Gastrocnemius medialis (tissue), 4 donors: ENCODE measurements at regions of chrX and their contacts with region 1.

Region 1: GRCh38 chrX:108537005-108537404 is 97.4 kb downstream of the COL4A5 start:
- DNase-seq: no peak
- ATAC-seq: peak in 1 of 2 donors; percentile 69
- H3K4me3 ChIP-seq: no peak overlapping the region
- H3K27ac ChIP-seq: no peak overlapping the region
- H3K4me1 ChIP-seq: no peaks in the 10 kb centered on the region
- H3K27me3 ChIP-seq: no peaks in the 10 kb centered on the region
- CTCF ChIP-seq: peak; percentile 57 to 71 (median 62)
- POLR2A ChIP-seq: no peak

Region 2: GRCh38 chrX:108224727-108225621 is 312.0 kb before region 1 on chrX:
- in situ Hi-C with region 1: loop called in 3 of 4 experiments (anchors 5 to 25 kb)
- intact Hi-C with region 1: loop called (anchors 2 kb)
- DNase-seq: no peak
- ATAC-seq: no peak
- H3K4me3 ChIP-seq: no peak overlapping the region
- H3K27ac ChIP-seq: no peak overlapping the region
- H3K4me1 ChIP-seq: no peaks in the 10 kb centered on the region
- H3K27me3 ChIP-seq: no peaks in the 10 kb centered on the region
- CTCF ChIP-seq: peak; percentile 19 to 61 (median 32)
- POLR2A ChIP-seq: no peak

Region 3: GRCh38 chrX:108297282-108297681 is 239.7 kb before region 1 on chrX:
- in situ Hi-C with region 1: no loop called
- intact Hi-C with region 1: loop called (anchors 2 kb)
- DNase-seq: no peak
- ATAC-seq: no peak
- H3K4me3 ChIP-seq: no peak overlapping the region
- H3K27ac ChIP-seq: no peak overlapping the region
- H3K4me1 ChIP-seq: no peaks in the 10 kb centered on the region
- H3K27me3 ChIP-seq: no peaks in the 10 kb centered on the region
- CTCF ChIP-seq: peak in 2 of 5 experiments; percentile 20 to 23
- POLR2A ChIP-seq: no peak